ENCODE measurements at regions of chr1 and their contacts with region 1.

Region 1: DNA sequence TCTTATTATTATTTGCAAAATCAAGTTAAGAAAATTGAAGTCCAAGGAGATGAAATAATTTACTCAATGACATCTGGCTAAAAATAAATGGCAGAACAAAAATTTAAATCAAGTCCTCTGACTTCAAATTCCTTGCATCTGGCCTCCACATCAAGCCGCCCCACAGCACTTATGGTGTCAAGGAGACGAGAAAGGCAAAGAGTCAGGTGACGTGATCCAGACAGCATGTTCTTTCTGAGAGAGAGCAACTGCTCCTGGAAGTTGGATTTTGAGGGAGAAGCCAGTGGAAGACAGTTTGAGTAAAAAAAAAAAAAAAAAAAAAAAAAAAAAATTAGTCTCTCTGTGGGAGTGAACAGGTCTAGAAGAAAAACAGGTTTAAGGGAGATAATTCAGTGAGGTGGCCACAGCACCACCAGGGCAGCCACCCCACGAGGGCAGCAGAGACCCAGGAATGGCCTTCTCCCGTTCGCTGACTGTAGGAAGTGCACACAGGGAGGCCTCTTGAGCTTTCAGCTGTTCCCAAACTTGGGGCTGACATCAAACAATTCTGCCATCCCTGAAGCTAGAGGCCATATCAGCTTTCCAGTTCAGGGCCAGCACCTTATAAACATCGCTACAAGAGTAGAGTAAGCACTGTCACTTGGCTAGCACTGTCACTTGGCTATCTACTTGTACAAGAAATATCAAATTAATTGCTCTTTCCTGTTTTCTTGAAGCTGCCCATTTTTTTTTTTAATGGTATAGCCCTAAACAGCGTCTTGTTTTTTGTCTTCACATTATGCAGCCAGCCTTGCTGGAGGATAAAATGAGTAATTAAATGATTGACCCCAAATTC is 7.8 kb downstream of the C1orf162 start:
- DNase-seq: peak; percentile 3
- H3K4me3 ChIP-seq: no peak overlapping the region
- CTCF ChIP-seq: peak; percentile 86

Region 2: GRCh38 chr1:111471012-111471411 is 10.6 kb before region 1 on chr1:
- CTCF ChIA-PET with region 1: interaction called, 12 read pairs
- POLR2A ChIA-PET with region 1: no interaction called
- DNase-seq: no peak
- H3K4me3 ChIP-seq: no peak overlapping the region
- CTCF ChIP-seq: no peak

Region 3: DNA sequence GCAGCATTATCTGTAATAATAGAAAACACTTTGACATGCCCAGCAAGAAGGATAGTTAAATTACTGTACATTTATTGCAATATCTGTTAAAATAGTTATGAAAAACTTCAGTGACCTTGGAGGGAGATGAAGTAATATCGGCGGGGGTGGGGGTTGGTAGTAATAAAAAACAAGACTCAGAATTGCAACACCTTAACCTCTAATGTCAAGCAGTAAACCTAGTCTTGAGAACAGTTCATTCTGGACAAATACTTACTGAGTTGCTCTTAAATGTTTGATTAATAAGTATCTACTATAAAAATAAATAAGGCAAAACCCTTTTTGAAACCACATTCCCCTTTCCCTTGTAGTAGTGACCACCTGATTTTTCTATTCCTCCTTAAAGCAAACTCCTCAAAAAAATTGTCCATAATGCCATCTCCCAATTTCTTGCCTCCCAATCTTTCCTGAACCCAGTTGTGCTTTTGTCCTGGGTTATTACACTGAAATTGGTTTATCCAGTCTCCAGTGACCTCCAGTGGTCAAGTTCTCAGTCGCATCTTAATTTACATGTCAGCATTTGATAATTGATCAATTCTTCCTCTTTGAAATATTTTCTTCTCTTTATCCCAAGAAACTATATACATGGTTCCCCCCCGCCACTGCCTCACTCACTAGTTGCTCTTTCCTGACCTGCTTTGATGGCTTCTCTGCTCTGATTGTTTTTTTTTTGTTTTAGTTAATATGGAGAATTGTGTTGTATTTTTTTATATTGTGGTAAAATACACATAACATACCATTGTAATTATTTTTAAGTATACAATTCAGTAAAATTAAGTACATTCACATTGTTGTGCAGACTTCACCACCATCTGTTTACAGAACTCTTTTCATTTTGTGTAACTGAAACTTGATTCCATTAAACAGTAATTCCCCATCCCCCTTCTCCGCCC is 174.7 kb after region 1 on chr1:
- CTCF ChIA-PET with region 1: interaction called, 11 read pairs
- POLR2A ChIA-PET with region 1: no interaction called
- DNase-seq: no peak
- H3K4me3 ChIP-seq: no peak overlapping the region
- CTCF ChIP-seq: peak; percentile 37

Region 4: GRCh38 chr1:111720977-111721786 is 239.6 kb after region 1 on chr1:
- CTCF ChIA-PET with region 1: interaction called, 59 read pairs
- POLR2A ChIA-PET with region 1: no interaction called
- DNase-seq: no peak
- H3K4me3 ChIP-seq: no peak overlapping the region
- CTCF ChIP-seq: no peak

Region 5: DNA sequence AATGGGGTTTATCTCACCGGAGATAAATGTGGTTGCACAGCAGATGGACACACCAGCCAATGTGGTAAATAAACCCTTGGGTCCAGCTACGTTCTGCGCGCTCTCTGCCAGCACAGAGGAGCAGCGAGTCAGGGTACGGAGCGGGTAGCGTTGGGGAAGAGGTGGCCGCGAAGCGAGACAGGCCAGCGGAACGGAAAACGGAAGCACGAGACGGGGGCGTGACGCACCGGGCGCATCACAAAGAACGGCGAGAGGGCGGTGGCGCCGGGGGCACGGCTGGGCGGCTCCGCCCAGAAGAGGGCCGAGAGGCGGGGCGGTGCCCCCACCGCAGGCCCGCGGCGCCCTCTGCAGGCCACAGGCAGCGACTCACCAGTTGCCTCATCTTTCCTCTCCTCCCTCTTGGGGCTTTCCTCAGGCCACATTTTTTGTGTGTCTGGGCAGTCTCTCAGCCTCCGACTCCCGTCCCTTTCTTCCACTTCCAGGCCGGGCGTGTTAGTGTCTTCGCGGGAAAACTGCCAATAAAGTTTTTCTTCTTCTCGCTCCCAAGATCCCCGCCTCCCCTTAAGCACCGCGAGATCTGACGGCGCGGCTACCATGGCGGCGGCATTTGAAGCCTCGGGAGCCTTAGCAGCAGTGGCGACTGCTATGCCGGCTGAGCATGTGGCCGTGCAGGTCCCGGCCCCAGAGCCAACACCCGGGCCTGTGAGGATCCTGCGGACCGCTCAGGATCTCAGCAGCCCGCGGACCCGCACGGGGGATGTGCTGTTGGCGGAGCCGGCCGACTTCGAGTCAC is 273.9 kb after region 1 on chr1 and contains the start of gene DDX20:
- CTCF ChIA-PET with region 1: interaction called, 82 read pairs
- POLR2A ChIA-PET with region 1: no interaction called
- DNase-seq: peak; percentile 95
- H3K4me3 ChIP-seq: peak within 1 kb of the TSS; percentile 91
- CTCF ChIP-seq: peak; percentile 85